IMR-90 (cell line): ENCODE measurements at regions of chr12 and their contacts with region 1.

Region 1: DNA sequence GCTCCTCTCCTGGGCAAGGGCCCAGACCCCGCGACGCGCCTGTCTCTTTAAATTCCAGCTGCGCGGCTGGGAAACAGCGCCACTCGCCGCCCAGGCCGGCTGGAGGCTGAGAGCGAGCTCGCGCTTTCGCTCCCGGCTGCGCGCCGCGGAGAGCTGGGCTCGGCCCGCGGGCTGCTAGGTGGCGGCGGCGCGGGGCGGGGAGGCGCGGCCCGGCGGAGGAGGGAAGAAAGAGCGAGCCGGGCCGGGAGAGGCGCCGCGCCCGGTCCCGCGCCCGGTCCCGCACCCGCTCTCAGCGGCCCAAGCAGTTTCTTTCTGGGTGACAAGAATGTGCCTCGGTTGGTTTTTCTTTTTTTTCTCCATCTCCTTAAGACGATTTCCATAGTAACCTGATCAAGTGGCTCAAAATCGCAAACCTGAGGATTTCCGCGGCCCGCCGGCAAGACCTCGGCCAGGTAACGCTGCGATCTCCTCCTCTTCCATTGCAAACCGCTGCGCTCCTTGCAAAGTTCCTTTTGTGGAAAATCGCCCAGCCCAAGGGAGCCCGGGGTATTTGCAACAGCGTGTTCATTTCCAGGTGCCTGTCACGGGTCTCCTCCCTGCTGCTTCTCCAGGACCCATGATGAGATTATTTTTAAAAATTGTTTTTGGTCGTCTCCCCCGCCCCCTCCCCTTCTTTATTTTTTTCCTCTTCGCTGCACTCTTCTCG is 259.5 kb upstream of the E2F7 start:
- DNase-seq: peak; percentile 61
- ATAC-seq: peak; percentile 99
- H3K4me3 ChIP-seq: peak overlapping the region; percentile 55
- H3K27ac ChIP-seq: no peak overlapping the region
- H3K4me1 ChIP-seq: no peaks in the 10 kb centered on the region
- H3K27me3 ChIP-seq: peaks cover 24% of the 10 kb centered on the region
- CTCF ChIP-seq: peak; percentile 65
- POLR2A ChIP-seq: no peak
- RAD21 ChIP-seq: peak; percentile 61

Region 2: DNA sequence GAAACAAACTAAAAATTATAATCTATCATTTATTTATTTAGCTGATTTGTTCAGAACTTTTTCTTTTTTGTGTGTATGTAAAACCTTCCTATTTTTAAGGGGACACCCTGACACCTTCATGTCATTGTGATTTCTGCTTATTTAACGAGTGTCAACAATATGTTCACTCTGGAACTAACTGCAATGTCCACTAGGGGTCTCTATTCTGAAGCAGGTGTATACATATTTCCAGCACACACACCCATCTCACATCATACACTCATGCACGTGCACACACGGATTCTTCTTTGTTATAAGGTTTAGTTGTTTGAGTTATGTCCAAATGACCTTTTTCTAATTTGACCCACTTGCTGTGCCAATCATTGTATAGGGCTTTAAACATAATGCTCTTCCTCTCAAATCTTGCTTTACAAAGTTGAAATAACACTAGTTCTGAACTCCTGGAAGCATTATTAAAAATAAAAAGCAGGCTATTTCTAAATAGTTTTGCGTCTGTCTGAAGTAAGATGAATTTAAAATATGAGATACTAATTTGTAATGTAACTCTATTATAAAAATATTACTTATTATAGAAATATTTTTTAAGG is 275.1 kb before region 1 on chr12:
- CTCF ChIA-PET with region 1: interaction called, 4 read pairs
- POLR2A ChIA-PET with region 1: no interaction called
- dilution Hi-C with region 1: no loop called
- in situ Hi-C with region 1: loop called (anchors 10 kb)
- intact Hi-C with region 1: loop called (anchors 5 kb)
- DNase-seq: peak; percentile 70
- ATAC-seq: peak; percentile 80
- H3K4me3 ChIP-seq: no peak overlapping the region
- H3K27ac ChIP-seq: no peak overlapping the region
- H3K4me1 ChIP-seq: no peaks in the 10 kb centered on the region
- H3K27me3 ChIP-seq: no peaks in the 10 kb centered on the region
- CTCF ChIP-seq: peak; percentile 69
- POLR2A ChIP-seq: no peak
- RAD21 ChIP-seq: peak; percentile 71

Region 3: DNA sequence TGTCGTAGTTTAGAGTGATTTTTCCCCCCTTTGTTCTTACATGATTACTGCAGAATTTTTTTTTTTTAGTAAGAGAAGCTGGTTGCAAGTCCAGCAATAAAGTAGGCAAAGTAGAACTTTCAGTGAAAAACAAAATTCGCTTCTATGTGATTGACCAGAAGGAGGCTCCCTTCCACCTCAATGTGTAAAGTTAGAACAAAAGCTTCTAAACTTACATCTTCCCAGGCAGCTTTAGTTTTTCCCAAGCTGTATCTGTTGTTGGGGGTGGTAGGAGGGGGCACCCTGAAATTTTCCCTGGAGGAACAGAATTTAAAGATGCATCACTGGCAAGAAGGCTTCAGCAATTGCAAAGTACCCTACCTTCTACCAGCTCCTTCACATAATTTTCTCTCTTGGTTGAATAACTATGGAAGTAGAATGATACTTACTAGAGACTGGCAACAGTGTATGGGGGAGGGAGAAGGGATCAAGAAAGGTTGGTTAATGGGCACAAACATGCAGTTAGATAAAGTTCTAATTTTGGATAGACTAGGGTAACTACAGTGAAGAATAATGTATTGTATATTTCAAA is 172.2 kb before region 1 on chr12:
- CTCF ChIA-PET with region 1: no interaction called
- POLR2A ChIA-PET with region 1: no interaction called
- dilution Hi-C with region 1: no loop called
- in situ Hi-C with region 1: no loop called
- intact Hi-C with region 1: loop called (anchors 5 kb)
- DNase-seq: peak; percentile 56
- ATAC-seq: peak; percentile 54; the same call in 1 of the 2 replicates
- H3K4me3 ChIP-seq: no peak overlapping the region
- H3K27ac ChIP-seq: no peak overlapping the region
- H3K4me1 ChIP-seq: no peaks in the 10 kb centered on the region
- H3K27me3 ChIP-seq: no peaks in the 10 kb centered on the region
- CTCF ChIP-seq: peak; percentile 65
- POLR2A ChIP-seq: no peak
- RAD21 ChIP-seq: peak; percentile 76